ENCODE measurements at regions of chr1 and their contacts with region 1.

Region 1: GRCh38 chr1:110460253-110461220 is 9.6 kb downstream of the PROK1 start:
- DNase-seq: peak; percentile 88
- H3K4me3 Mint-ChIP-seq: no peak overlapping the region
- H3K27ac Mint-ChIP-seq: no peak overlapping the region
- H3K4me1 Mint-ChIP-seq: no peaks in the 10 kb centered on the region
- H3K27me3 Mint-ChIP-seq: no peaks in the 10 kb centered on the region

Region 2: GRCh38 chr1:110196917-110197765 is 263.4 kb before region 1 on chr1:
- CTCF ChIA-PET with region 1: interaction called, 23 read pairs
- POLR2A ChIA-PET with region 1: no interaction called
- DNase-seq: peak; percentile 75
- H3K4me3 Mint-ChIP-seq: no peak overlapping the region
- H3K27ac Mint-ChIP-seq: no peak overlapping the region
- H3K4me1 Mint-ChIP-seq: no peaks in the 10 kb centered on the region
- H3K27me3 Mint-ChIP-seq: no peaks in the 10 kb centered on the region

Region 3: DNA sequence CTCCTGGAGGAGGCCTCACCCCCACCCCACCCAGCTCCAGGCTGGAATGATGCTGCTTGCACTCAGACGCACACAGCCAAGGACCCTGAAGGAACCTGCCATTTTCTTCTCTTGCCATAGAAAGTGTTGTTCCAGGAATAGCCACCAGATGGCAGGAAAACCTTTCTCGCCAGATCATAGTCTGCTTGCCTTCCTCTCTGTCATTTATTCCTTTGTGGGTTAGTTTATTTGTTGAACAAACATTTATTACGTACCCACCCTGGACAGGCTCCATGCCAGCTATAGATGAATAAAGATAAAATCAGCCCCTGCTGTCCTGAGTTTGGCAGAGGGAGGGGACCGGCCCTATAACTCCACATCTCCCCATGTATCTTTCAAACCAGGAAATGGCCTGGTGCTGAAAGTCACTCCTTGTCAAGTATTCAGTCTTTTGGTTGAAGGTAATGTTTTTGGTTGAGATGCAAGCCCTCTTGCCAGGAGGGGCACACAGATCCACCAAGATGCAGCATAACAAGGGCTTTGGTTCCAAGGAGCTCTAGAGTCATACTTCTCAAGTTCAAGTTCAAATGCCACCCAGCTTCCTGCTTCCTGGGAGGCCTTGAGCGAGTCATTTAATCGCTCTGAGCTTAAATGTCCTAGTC is 257.4 kb before region 1 on chr1:
- CTCF ChIA-PET with region 1: interaction called, 36 read pairs
- POLR2A ChIA-PET with region 1: no interaction called
- DNase-seq: peak; percentile 85
- H3K4me3 Mint-ChIP-seq: no peak overlapping the region
- H3K27ac Mint-ChIP-seq: peak overlapping the region; percentile 92
- H3K4me1 Mint-ChIP-seq: peaks cover 25% of the 10 kb centered on the region
- H3K27me3 Mint-ChIP-seq: no peaks in the 10 kb centered on the region

Region 4: GRCh38 chr1:110338886-110339406 is 121.6 kb before region 1 on chr1 and contains the start of gene RBM15:
- CTCF ChIA-PET with region 1: interaction called, 21 read pairs
- POLR2A ChIA-PET with region 1: no interaction called
- DNase-seq: peak; percentile 99
- H3K4me3 Mint-ChIP-seq: no peak within 1 kb of the TSS
- H3K27ac Mint-ChIP-seq: no peak within 1 kb of the TSS
- H3K4me1 Mint-ChIP-seq: peaks cover 59% of the 10 kb centered on the region
- H3K27me3 Mint-ChIP-seq: no peaks in the 10 kb centered on the region
- total RNA-seq, gene RBM15: 69.9 to 71.2 TPM

Region 5: DNA sequence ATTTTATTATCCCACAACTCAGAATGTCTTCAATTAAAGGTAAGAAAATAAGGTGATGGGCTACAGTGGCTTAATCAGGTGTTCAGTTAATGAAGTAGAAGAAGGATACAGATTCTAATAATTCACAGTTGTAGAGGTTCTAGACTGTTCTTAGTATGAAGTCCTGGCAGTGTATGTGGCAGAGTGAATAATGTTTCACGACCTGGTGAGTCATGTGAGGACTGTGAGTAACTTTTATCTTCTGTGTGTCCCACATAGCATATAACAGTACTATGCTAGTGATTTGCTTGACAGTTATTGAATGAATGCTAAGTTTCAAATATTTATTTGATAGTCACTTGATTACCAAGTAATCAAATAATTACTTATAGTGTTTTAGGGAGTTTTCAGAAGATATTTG is 89.7 kb before region 1 on chr1:
- CTCF ChIA-PET with region 1: no interaction called
- POLR2A ChIA-PET with region 1: no interaction called
- DNase-seq: no peak
- H3K4me3 Mint-ChIP-seq: no peak overlapping the region
- H3K27ac Mint-ChIP-seq: peak overlapping the region; percentile 1
- H3K4me1 Mint-ChIP-seq: peaks cover 8% of the 10 kb centered on the region
- H3K27me3 Mint-ChIP-seq: no peaks in the 10 kb centered on the region

Region 6: DNA sequence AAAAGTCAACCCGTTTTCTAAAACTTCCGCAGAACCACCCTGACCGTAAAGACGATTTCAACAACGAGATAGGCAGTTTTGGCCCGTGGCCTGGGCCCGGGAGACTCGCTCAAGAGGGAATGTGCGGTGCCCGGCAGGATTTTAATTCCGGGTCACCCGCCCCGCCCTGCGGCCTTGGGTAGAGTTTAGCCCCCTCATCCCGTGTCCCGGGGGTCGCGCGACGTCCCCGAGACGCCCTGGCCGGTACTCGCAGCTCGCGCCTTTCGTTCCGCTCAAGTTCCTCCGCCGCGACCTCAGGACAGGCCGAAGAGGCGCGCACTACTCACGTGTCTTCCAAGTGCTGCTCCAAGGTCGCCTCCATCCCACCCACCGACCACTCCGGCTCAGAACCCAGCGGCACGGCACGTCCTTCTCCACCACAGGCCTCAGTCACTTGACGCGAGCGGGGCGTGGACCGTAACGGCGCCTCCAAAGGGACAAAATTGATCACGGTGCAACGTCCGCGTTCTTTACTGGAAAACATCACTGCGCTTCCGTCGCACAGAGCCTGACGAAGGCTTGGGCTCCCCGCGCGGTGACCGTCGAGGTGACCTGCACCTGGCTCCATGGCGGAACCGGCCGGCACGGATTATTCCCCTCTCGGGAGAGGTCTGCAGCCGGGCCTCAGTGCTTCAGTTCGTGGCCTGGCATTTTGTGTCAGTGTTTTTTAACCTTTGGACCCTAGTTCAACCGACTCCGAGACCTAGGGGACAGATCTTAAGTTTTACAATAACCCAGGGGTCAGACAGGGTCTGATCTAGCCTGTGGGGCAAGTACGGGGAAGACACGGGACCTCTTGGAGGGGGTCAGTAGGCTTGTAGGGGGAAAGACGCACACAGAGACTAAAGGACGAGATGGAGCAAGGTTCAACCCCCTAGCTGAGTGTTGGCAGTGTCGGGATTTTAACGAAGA is 53.0 kb before region 1 on chr1 and contains the start of gene LAMTOR5:
- CTCF ChIA-PET with region 1: interaction called, 22 read pairs
- POLR2A ChIA-PET with region 1: interaction called, 6 read pairs
- DNase-seq: peak; percentile 95
- H3K4me3 Mint-ChIP-seq: peak within 1 kb of the TSS; percentile 99
- H3K27ac Mint-ChIP-seq: peak within 1 kb of the TSS; percentile 100
- H3K4me1 Mint-ChIP-seq: peaks cover 22% of the 10 kb centered on the region
- H3K27me3 Mint-ChIP-seq: no peaks in the 10 kb centered on the region
- total RNA-seq, gene LAMTOR5: 113 to 120 TPM

Region 7: DNA sequence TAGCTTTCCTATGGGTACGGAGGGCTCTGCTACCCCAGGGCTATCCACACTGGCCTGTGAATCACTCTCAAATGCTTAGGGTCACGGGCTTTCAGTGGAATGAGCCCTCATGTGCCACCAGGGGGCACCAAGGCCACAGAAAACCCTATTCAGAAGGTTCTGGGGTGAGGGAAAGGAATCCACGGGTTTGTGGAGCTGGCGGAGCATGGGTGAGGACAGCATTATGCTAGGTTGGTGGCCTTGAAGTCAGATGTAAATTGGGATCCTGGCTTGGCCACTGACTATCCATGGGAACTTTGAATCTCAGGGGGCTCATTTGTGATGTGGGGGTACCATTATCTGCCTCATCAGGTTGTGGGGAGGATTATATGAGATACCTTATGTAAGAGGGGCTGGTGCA is 48.0 kb before region 1 on chr1:
- CTCF ChIA-PET with region 1: interaction called, 22 read pairs
- POLR2A ChIA-PET with region 1: no interaction called
- DNase-seq: peak; percentile 71
- H3K4me3 Mint-ChIP-seq: no peak overlapping the region
- H3K27ac Mint-ChIP-seq: no peak overlapping the region
- H3K4me1 Mint-ChIP-seq: peaks cover 15% of the 10 kb centered on the region
- H3K27me3 Mint-ChIP-seq: no peaks in the 10 kb centered on the region

Region 8: DNA sequence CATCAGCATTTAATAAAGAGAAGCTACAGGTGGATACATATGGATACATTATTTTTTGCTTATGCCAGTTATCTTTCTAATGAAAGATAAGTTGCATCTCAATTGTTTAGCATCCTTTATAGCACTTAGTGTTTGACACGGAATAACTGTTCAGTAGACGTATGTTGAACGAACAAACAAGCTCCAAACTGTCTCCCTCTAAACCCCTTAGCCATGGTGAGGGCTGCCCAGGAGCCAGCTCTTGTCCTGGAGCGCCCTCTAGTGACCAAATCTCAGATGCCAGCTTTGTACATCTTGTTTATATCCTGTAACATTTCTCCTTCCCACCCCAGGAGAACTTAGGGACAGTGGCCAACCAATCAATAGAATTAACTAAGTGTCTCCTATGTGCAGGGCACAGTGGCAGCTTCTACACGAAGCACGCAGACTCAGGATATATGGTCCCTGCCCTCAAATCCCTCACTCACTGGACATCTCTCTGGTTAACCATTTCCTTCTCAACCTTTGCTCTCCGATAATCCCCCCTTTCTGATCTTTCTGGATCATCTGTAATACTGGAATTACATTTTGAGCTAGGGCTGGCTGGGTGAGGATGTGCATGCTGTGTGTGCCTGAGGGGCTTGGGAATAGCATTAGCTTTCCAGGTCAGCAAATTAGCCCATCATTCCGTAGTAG is 35.5 kb after region 1 on chr1:
- CTCF ChIA-PET with region 1: interaction called, 17 read pairs
- POLR2A ChIA-PET with region 1: no interaction called
- DNase-seq: peak; percentile 86
- H3K4me3 Mint-ChIP-seq: no peak overlapping the region
- H3K27ac Mint-ChIP-seq: no peak overlapping the region
- H3K4me1 Mint-ChIP-seq: peaks cover 4% of the 10 kb centered on the region
- H3K27me3 Mint-ChIP-seq: no peaks in the 10 kb centered on the region

Measured in activated CD4-positive, alpha-beta T cell treated with anti-CD3 and anti-CD28 coated beads, Interleukin-2, amount 10 ng/mL, durations not matched to agents 7 days and 5 days (primary cell).